Activated CD4-positive, alpha-beta memory T cell treated with anti-CD3 and anti-CD28 coated beads for 36 hours (primary cell): ENCODE measurements at regions of chr17 and their contacts with region 1.

Region 1: DNA sequence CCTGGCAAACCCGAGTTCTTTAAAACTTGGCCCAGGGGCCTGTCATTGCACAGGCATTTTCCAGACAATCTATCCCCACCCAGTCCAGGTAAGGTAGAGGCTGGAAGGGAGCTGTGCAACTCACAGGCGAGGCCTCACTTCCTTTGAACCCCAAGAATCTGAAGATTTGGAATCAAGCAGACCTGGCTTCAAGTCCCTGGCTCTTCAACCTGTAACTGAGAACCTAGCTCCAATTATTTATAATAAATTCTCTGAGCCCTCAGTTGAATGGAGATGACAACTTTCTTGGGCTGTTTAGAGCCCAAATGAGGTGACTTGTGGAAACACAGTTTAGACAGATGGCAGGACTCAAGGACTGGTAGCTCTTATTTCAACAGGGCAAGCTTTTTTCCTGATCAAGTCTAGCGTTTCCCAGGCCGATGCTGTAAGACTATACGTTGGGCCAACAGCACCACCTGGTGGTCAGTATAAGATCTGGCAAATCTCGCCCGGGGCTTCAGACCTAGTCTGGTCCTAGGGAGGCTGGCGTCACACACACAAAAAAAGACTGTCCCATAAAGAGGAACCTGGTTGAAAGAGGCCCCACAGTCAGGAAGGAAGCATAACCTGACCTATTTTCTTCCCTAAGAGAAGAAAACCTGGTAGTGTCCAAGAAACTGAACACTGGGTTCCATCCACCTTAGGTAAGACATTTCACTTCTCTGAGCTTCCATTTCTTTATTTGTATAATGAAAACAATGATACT is 117.9 kb downstream of the C17orf67 start:
- DNase-seq: peak; percentile 83
- H3K4me3 Mint-ChIP-seq: no peak overlapping the region
- H3K27ac Mint-ChIP-seq: no peak overlapping the region
- H3K4me1 Mint-ChIP-seq: peaks cover 3% of the 10 kb centered on the region
- H3K27me3 Mint-ChIP-seq: peaks cover 5% of the 10 kb centered on the region

Region 2: DNA sequence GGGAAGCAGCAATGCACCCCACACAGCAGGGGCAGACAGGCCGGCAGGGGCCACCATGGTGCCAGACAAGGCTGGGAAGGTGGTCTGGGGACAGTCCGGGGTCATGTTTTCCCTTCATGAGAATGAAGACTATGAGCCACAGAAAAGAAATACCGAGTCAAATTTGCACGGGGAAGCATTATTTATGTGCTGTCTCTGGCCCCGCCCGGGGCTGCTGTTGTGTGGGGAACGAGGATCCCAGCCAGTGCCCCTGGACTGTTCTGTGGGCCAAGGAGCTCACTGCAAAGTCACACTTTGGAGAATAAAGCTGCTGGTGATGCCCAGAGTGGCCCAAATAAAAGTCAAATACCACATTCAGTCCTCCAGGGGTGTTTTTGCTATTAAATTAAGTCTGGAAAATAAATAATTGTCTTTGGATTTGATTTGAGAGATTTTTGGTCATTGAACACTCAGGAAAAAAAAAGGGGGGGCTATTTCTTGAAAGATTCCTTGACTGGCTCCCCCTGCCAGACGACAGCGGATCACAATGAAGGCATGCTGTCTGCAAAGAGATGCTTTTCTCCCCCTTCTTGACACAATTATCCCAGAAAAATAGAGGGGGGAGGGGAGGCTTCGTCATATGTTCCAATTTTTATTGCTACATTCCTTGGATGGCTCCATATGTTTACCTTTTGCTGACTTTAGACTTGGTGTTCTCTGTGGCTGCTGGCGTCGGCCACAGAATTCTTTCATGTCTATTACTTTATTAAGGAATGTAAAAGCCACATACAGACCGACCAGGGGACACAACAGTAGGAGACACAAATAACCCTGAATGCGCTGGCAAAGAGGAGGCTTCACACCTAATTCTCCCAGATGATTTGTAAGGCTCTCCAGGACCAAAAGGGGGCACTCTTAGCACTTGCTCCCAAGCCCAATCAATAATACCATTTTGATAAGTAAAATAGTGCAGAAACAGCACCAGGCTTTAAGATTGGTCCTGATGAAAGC is 589.7 kb before region 1 on chr17:
- CTCF ChIA-PET with region 1: no interaction called
- POLR2A ChIA-PET with region 1: no interaction called
- intact Hi-C with region 1: loop called (anchors 5 kb)
- DNase-seq: no peak
- H3K4me3 Mint-ChIP-seq: no peak overlapping the region
- H3K27ac Mint-ChIP-seq: no peak overlapping the region
- H3K4me1 Mint-ChIP-seq: no peaks in the 10 kb centered on the region
- H3K27me3 Mint-ChIP-seq: peaks cover 6% of the 10 kb centered on the region

Region 3: GRCh38 chr17:56510554-56511342 is 205.0 kb before region 1 on chr17:
- CTCF ChIA-PET with region 1: interaction called, 11 read pairs
- POLR2A ChIA-PET with region 1: no interaction called
- intact Hi-C with region 1: no loop called
- DNase-seq: no peak
- H3K4me3 Mint-ChIP-seq: no peak overlapping the region
- H3K27ac Mint-ChIP-seq: no peak overlapping the region
- H3K4me1 Mint-ChIP-seq: no peaks in the 10 kb centered on the region
- H3K27me3 Mint-ChIP-seq: no peaks in the 10 kb centered on the region

Region 4: GRCh38 chr17:56602292-56603130 is 113.3 kb before region 1 on chr17:
- CTCF ChIA-PET with region 1: interaction called, 25 read pairs
- POLR2A ChIA-PET with region 1: interaction called, 4 read pairs
- intact Hi-C with region 1: no loop called
- DNase-seq: no peak
- H3K4me3 Mint-ChIP-seq: no peak overlapping the region
- H3K27ac Mint-ChIP-seq: no peak overlapping the region
- H3K4me1 Mint-ChIP-seq: peaks cover 34% of the 10 kb centered on the region
- H3K27me3 Mint-ChIP-seq: peaks cover 25% of the 10 kb centered on the region

Region 5: GRCh38 chr17:56679115-56679766 is 36.5 kb before region 1 on chr17:
- CTCF ChIA-PET with region 1: interaction called, 27 read pairs
- POLR2A ChIA-PET with region 1: no interaction called
- intact Hi-C with region 1: loop called (anchors 2 kb)
- DNase-seq: no peak
- H3K4me3 Mint-ChIP-seq: peak overlapping the region; percentile 52
- H3K27ac Mint-ChIP-seq: no peak overlapping the region
- H3K4me1 Mint-ChIP-seq: peaks cover 19% of the 10 kb centered on the region
- H3K27me3 Mint-ChIP-seq: peaks cover 33% of the 10 kb centered on the region

Region 6: DNA sequence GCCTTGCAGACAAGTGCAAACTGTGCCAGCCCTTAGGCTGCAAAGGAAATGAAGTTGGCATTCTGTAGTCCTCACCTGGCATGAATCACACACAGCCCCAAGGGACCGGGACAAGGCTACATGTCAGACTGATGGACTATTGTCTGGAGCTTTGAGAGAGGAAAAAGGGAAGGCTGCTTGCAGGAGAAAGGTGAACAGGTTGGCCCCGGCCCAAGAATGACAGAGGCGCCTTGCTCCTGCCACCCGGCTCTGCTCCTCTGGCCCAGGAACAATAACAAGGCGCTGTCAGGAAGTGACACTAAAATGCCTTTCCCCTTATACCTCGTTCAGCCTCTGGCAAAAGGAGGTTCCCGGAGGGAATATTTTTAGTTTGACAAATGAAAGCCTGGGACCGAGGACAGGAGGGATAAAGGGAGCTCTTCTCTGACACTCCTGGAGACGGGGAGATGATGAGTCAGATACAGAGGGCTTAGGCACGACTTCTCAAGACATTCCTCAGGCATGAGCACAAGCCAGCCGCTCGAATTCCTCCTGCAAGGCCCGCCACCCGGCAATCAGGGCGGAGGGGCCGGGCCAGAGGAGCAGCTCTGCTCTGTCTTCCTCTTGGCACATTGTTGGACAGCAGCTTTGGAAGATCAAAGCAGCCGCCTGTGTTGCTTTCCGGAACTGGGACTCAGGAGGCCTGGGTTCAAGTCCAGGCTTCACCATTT is 16.4 kb before region 1 on chr17:
- CTCF ChIA-PET with region 1: interaction called, 14 read pairs
- POLR2A ChIA-PET with region 1: no interaction called
- intact Hi-C with region 1: no loop called
- DNase-seq: no peak
- H3K4me3 Mint-ChIP-seq: no peak overlapping the region
- H3K27ac Mint-ChIP-seq: no peak overlapping the region
- H3K4me1 Mint-ChIP-seq: no peaks in the 10 kb centered on the region
- H3K27me3 Mint-ChIP-seq: peaks cover 2% of the 10 kb centered on the region

Region 7: GRCh38 chr17:56779898-56780733 is 64.3 kb after region 1 on chr17:
- CTCF ChIA-PET with region 1: interaction called, 56 read pairs
- POLR2A ChIA-PET with region 1: no interaction called
- intact Hi-C with region 1: loop called (anchors 1 kb)
- DNase-seq: peak; percentile 91
- H3K4me3 Mint-ChIP-seq: peak overlapping the region; percentile 79
- H3K27ac Mint-ChIP-seq: peak overlapping the region; percentile 74
- H3K4me1 Mint-ChIP-seq: peaks cover 23% of the 10 kb centered on the region
- H3K27me3 Mint-ChIP-seq: peaks cover 2% of the 10 kb centered on the region